PC-9 (cell line): ENCODE measurements at regions of chr4 and their contacts with region 1.

Region 1: DNA sequence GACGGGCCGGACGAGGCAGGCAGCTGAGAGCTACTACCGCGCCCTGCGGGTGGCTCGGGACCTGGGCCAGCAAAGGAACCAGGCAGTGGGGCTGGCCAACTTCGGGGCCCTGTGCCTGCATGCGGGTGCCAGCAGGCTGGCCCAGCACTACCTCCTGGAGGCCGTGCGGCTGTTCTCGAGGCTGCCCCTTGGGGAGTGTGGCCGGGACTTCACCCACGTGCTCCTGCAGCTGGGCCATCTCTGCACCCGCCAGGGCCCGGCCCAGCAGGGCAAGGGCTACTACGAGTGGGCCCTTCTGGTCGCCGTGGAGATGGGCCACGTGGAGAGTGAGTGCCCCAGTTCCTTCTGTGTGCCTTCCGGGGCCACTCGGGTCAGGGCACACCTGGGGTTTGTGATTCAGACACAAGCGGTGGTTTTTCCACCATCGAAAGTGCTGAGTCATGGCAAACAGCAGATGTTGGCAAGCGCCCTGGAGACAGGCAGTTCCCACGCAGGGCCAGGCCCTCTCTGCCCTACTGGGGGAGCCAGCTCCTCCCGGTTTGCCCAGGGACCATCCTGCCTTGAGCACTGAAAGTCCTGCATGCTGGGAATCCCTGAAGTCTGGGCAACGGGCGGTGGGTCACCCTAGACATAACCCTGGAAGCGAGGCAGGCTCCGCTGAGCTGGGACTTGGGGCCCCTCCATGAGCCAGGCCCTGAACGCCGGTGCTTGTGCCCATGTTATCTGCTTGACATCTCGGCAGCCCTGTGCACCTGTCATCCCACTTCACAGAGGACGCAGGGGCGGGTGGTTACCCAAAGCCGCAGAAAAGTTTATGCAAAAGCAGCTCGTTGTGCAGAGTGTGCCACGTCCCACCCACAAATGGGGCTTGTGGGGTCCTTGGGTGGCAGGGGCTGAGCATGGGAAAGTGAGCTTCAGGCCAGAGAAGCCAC is 29.5 kb downstream of the SH3TC1 start:
- DNase-seq: peak; percentile 57 to 70
- H3K4me3 ChIP-seq: no peak overlapping the region
- H3K27ac ChIP-seq: peak overlapping the region; percentile 26; the same call in 1 of the 2 replicates
- H3K4me1 ChIP-seq: peaks cover 13% of the 10 kb centered on the region
- H3K27me3 ChIP-seq: no peaks in the 10 kb centered on the region
- CTCF ChIP-seq: no peak

Region 2: GRCh38 chr4:8182858-8183725 is 45.5 kb before region 1 on chr4:
- CTCF ChIA-PET with region 1: no interaction called
- POLR2A ChIA-PET with region 1: interaction called, 4 read pairs
- intact Hi-C with region 1: loop called (anchors 2 kb)
- DNase-seq: peak; percentile 97 to 98
- H3K4me3 ChIP-seq: no peak overlapping the region
- H3K27ac ChIP-seq: peak overlapping the region; percentile 75
- H3K4me1 ChIP-seq: peaks cover 40% of the 10 kb centered on the region
- H3K27me3 ChIP-seq: no peaks in the 10 kb centered on the region
- CTCF ChIP-seq: no peak

Region 3: GRCh38 chr4:9143421-9144080 is 915.0 kb after region 1 on chr4:
- CTCF ChIA-PET with region 1: interaction called, 10 read pairs
- POLR2A ChIA-PET with region 1: no interaction called
- intact Hi-C with region 1: no loop called
- DNase-seq: no peak
- H3K4me3 ChIP-seq: no peak overlapping the region
- H3K27ac ChIP-seq: no peak overlapping the region
- H3K4me1 ChIP-seq: no peaks in the 10 kb centered on the region
- H3K27me3 ChIP-seq: no peaks in the 10 kb centered on the region
- CTCF ChIP-seq: no peak